Caco-2 (cell line): ENCODE measurements at regions of chr7 and their contacts with region 1.

Region 1: GRCh38 chr7:123154231-123154860 is 45.4 kb downstream of the SLC13A1 start:
- DNase-seq: peak; percentile 74 to 82
- H3K4me3 ChIP-seq: no peak overlapping the region
- H3K4me3 Mint-ChIP-seq: no peak overlapping the region
- H3K27ac Mint-ChIP-seq: no peak overlapping the region
- H3K4me1 ChIP-seq: no peaks in the 10 kb centered on the region
- H3K4me1 Mint-ChIP-seq: no peaks in the 10 kb centered on the region
- H3K27me3 ChIP-seq: no peaks in the 10 kb centered on the region
- H3K27me3 Mint-ChIP-seq: peaks cover 11% of the 10 kb centered on the region
- CTCF ChIP-seq: peak; percentile 72 to 75

Region 2: DNA sequence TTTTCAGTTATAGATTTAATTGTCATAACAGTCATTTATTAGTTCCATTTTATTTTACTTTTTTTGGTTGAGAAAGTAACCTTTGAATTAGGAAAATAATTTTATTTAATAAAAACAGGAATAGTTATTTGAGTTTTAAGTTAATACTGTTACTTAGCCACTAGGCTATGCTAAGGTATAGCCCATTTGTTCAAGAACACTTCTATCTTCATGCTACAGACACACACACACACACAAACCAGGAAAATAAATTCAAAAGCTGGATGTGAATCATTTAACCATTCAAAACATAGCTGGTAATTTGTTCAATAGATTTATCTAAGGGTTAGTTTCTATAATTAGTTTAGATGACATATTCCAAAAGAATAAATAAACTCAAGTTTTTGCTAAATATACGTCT is 603.8 kb before region 1 on chr7:
- CTCF ChIA-PET with region 1: no interaction called
- POLR2A ChIA-PET with region 1: no interaction called
- intact Hi-C with region 1: loop called (anchors 1 kb)
- DNase-seq: no peak
- H3K4me3 ChIP-seq: no peak overlapping the region
- H3K4me3 Mint-ChIP-seq: no peak overlapping the region
- H3K27ac Mint-ChIP-seq: no peak overlapping the region
- H3K4me1 ChIP-seq: no peaks in the 10 kb centered on the region
- H3K4me1 Mint-ChIP-seq: no peaks in the 10 kb centered on the region
- H3K27me3 ChIP-seq: no peaks in the 10 kb centered on the region
- H3K27me3 Mint-ChIP-seq: no peaks in the 10 kb centered on the region
- CTCF ChIP-seq: peak; percentile 26 to 44

Region 3: GRCh38 chr7:122803323-122803722 is 351.0 kb before region 1 on chr7:
- CTCF ChIA-PET with region 1: interaction called, 6 read pairs
- POLR2A ChIA-PET with region 1: no interaction called
- intact Hi-C with region 1: loop called (anchors 1 kb)
- DNase-seq: no peak
- H3K4me3 ChIP-seq: no peak overlapping the region
- H3K4me3 Mint-ChIP-seq: no peak overlapping the region
- H3K27ac Mint-ChIP-seq: no peak overlapping the region
- H3K4me1 ChIP-seq: no peaks in the 10 kb centered on the region
- H3K4me1 Mint-ChIP-seq: no peaks in the 10 kb centered on the region
- H3K27me3 ChIP-seq: no peaks in the 10 kb centered on the region
- H3K27me3 Mint-ChIP-seq: no peaks in the 10 kb centered on the region
- CTCF ChIP-seq: peak; percentile 26 to 50

Region 4: DNA sequence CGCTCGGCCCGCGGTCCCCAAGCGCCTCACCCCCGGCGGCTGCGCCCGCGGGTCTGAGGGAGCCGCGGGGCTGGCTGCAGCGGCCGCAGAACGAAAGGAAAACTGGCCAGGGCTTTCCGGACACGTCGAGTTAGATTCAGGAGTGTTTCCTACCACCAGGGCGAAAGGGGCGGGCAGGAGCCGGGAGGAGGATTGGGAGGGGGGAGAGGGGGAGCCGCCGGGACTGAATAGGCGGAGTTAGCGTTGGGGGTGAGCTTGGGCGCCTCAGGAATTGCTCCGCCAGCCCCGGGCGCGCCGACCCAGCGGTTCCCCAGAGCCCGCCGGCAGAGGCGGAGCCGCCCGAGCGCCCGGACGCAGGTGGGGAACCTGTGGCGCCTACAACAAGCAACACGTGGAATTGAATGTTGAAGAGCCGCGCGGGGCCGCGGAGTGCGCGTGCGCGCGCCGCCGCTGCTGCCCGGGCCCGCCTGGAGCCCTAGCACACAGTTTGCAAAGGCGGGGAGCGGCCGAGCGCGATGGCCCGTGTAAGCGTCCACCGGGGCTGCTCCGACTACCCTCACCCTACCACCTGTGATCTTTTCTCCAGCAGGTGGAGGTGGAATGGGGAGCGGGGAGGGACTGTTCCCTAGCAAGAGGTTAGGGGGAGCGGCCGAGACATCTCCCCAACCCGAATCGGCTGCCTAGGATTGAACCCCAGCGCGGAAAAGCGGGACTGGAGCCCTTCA is 267.8 kb before region 1 on chr7 and contains the start of gene CADPS2:
- CTCF ChIA-PET with region 1: no interaction called
- POLR2A ChIA-PET with region 1: no interaction called
- intact Hi-C with region 1: loop called (anchors 10 kb)
- DNase-seq: peak; percentile 71 to 74
- H3K4me3 ChIP-seq: peak within 1 kb of the TSS; percentile 54
- H3K4me3 Mint-ChIP-seq: peak within 1 kb of the TSS; percentile 77
- H3K27ac Mint-ChIP-seq: no peak within 1 kb of the TSS
- H3K4me1 ChIP-seq: no peaks in the 10 kb centered on the region
- H3K4me1 Mint-ChIP-seq: peaks cover 6% of the 10 kb centered on the region
- H3K27me3 ChIP-seq: peaks cover 4% of the 10 kb centered on the region; the same call in 1 of the 2 replicates
- H3K27me3 Mint-ChIP-seq: peaks cover 12% of the 10 kb centered on the region
- CTCF ChIP-seq: peak in 1 of 2 experiments; percentile 9
- total RNA-seq, gene CADPS2: 2.7 and 3.6 TPM in 2 replicates

Region 5: DNA sequence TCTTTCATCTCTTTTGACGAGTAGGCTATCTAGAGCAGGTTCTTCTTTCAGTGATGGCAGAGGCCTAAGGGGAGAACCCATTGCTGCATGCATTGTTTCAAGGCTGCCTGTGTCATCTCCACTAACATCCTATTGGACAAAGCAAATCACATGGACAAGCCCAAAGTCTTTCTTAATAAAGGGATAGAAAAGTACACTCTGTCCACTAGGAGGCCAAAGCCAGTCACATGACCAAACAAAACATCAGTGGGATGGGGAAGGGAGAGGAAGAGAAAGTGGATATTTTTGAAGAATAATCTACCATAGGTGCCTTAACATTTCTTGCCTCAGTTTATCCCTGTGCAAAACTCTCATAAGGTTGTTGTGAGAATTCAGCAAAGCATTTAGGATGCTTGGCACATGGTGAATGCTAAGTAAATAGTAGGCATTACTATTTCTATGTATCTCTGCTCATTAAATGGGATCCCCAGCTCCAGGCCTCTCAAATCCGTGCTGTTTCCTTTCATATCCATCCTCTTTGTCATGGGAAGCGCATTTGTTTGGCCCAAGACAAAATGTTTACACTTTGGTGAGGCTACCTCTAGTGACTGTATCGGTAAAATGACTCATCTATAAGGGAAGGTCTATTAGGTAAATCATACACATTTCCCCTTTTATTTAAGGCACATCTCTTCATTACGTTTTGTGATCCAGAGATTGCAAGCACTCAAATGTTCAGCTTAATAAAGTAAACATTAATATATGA is 251.4 kb before region 1 on chr7:
- CTCF ChIA-PET with region 1: no interaction called
- POLR2A ChIA-PET with region 1: no interaction called
- intact Hi-C with region 1: loop called (anchors 2 kb)
- DNase-seq: peak in 1 of 2 experiments; percentile 10
- H3K4me3 ChIP-seq: no peak overlapping the region
- H3K4me3 Mint-ChIP-seq: no peak overlapping the region
- H3K27ac Mint-ChIP-seq: no peak overlapping the region
- H3K4me1 ChIP-seq: no peaks in the 10 kb centered on the region
- H3K4me1 Mint-ChIP-seq: no peaks in the 10 kb centered on the region
- H3K27me3 ChIP-seq: no peaks in the 10 kb centered on the region
- H3K27me3 Mint-ChIP-seq: no peaks in the 10 kb centered on the region
- CTCF ChIP-seq: peak in 1 of 2 experiments; percentile 22

Region 6: GRCh38 chr7:123070702-123071286 is 83.6 kb before region 1 on chr7:
- CTCF ChIA-PET with region 1: interaction called, 7 read pairs
- POLR2A ChIA-PET with region 1: no interaction called
- intact Hi-C with region 1: loop called (anchors 1 kb)
- DNase-seq: peak in 1 of 2 experiments; percentile 40
- H3K4me3 ChIP-seq: no peak overlapping the region
- H3K4me3 Mint-ChIP-seq: no peak overlapping the region
- H3K27ac Mint-ChIP-seq: no peak overlapping the region
- H3K4me1 ChIP-seq: no peaks in the 10 kb centered on the region
- H3K4me1 Mint-ChIP-seq: no peaks in the 10 kb centered on the region
- H3K27me3 ChIP-seq: no peaks in the 10 kb centered on the region
- H3K27me3 Mint-ChIP-seq: no peaks in the 10 kb centered on the region
- CTCF ChIP-seq: peak; percentile 63 to 73

Region 7: GRCh38 chr7:123314886-123315285 is 160.5 kb after region 1 on chr7:
- CTCF ChIA-PET with region 1: no interaction called
- POLR2A ChIA-PET with region 1: no interaction called
- intact Hi-C with region 1: no loop called
- DNase-seq: no peak
- H3K4me3 ChIP-seq: no peak overlapping the region
- H3K4me3 Mint-ChIP-seq: no peak overlapping the region
- H3K27ac Mint-ChIP-seq: no peak overlapping the region
- H3K4me1 ChIP-seq: no peaks in the 10 kb centered on the region
- H3K4me1 Mint-ChIP-seq: no peaks in the 10 kb centered on the region
- H3K27me3 ChIP-seq: no peaks in the 10 kb centered on the region
- H3K27me3 Mint-ChIP-seq: peaks cover 3% of the 10 kb centered on the region
- CTCF ChIP-seq: no peak

Region 8: DNA sequence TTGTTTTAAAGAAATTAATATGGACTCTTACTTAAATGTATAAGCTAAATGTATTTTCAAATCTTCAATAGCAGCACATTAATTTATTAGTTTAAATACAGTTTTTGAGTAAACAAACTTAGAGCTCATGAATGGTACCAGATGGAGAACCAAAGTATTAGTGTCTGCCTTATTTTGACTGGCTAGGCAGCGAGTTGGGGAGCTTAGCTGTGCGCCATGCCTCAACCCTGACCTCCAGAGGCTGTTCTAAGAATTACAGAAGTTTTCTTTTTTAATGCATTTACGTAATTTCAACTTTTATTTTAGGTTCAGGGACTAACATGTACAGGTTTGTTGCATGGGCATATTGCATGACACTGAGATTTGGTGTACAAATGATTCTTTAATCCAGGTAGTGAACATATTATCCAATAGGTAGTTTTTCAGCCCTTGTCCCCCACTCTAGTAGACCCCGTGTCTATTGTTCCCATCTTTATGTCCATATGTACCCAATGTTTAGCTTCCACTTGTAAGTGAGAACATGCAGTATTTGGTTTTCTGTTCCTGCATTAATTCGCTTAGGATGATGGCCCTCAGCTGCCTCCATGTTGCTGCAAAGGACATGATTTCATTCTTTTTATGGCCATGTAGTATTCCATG is 213.3 kb after region 1 on chr7:
- CTCF ChIA-PET with region 1: interaction called, 4 read pairs
- POLR2A ChIA-PET with region 1: no interaction called
- intact Hi-C with region 1: loop called (anchors 2 kb)
- DNase-seq: peak in 1 of 2 experiments; percentile 45
- H3K4me3 ChIP-seq: no peak overlapping the region
- H3K4me3 Mint-ChIP-seq: no peak overlapping the region
- H3K27ac Mint-ChIP-seq: no peak overlapping the region
- H3K4me1 ChIP-seq: no peaks in the 10 kb centered on the region
- H3K4me1 Mint-ChIP-seq: no peaks in the 10 kb centered on the region
- H3K27me3 ChIP-seq: no peaks in the 10 kb centered on the region
- H3K27me3 Mint-ChIP-seq: peaks cover 2% of the 10 kb centered on the region
- CTCF ChIP-seq: peak; percentile 67 to 74